ENCODE measurements at regions of chr9 and their contacts with region 1.

Region 1: DNA sequence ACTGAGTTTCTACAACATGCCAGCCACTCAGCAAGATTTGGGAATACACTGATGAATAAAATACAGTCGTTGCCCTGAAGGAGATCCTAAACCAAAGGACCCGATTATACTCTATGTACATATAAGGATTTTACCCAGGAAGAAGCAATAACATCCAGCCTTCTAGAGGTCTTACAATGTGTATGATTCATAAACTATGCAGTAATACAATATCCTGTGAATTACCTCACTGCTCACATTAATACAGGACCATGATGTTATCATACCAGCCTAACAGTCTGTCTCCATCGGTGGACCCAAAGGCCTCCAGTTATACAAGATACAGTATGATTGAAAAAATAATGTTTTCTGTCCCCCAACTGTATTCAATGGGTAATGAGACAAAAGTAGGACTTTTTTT is 310.5 kb upstream of the TRPM3 start:
- DNase-seq: no peak
- ATAC-seq: no peak
- H3K4me3 ChIP-seq: no peak overlapping the region
- H3K27ac ChIP-seq: no peak overlapping the region
- H3K4me1 ChIP-seq: no peaks in the 10 kb centered on the region
- H3K27me3 ChIP-seq: no peaks in the 10 kb centered on the region
- CTCF ChIP-seq: no peak
- POLR2A ChIP-seq: no peak

Region 2: DNA sequence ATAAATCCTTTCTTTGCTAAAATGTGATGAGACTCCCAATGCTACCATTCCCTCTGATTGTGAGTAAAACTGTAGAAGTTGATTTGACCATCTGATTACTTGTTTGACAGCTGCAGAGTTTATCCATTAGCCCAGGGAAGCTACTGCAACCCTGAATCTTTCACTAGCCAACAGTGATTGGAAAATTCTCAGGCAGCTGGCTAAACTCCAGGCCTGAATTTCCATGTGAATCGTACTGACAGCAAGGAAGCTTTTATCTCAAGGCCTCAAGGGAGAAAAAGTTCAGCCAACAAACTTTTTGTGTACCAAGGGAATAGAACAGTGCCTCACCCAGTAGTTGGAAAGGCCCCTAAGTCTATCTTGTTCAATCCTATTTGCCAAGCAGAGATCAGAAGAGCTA is 63.8 kb before region 1 on chr9:
- in situ Hi-C with region 1: loop called in 1 of 4 experiments (anchors 10 kb)
- intact Hi-C with region 1: no loop called
- DNase-seq: no peak
- ATAC-seq: no peak
- H3K4me3 ChIP-seq: no peak overlapping the region
- H3K27ac ChIP-seq: no peak overlapping the region
- H3K4me1 ChIP-seq: no peaks in the 10 kb centered on the region
- H3K27me3 ChIP-seq: no peaks in the 10 kb centered on the region
- CTCF ChIP-seq: no peak
- POLR2A ChIP-seq: no peak

Region 3: DNA sequence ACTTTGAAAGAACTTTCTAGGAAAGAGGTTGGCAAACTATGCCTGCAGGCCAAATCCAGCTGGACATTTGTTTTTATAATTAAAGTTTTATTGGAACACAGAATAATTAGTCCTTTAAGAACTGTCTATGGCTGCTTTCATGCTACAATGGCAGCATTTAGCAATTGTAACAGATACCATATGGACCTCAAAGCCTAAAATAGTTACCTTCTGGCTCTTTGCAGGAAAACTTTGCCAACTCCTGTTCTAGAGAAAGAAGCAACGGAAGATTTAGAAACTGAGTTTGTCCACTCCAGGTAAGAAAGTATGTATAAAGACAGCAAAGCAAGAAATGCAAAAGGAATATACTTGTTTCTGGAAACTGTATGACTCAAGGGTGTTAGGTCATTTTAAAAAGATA is 28.8 kb before region 1 on chr9:
- in situ Hi-C with region 1: no loop called
- intact Hi-C with region 1: no loop called
- DNase-seq: no peak
- ATAC-seq: no peak
- H3K4me3 ChIP-seq: no peak overlapping the region
- H3K27ac ChIP-seq: no peak overlapping the region
- H3K4me1 ChIP-seq: no peaks in the 10 kb centered on the region
- H3K27me3 ChIP-seq: no peaks in the 10 kb centered on the region
- CTCF ChIP-seq: no peak
- POLR2A ChIP-seq: no peak